GM10248 (cell line): ENCODE measurements at regions of chr5 and their contacts with region 1.

Region 1: DNA sequence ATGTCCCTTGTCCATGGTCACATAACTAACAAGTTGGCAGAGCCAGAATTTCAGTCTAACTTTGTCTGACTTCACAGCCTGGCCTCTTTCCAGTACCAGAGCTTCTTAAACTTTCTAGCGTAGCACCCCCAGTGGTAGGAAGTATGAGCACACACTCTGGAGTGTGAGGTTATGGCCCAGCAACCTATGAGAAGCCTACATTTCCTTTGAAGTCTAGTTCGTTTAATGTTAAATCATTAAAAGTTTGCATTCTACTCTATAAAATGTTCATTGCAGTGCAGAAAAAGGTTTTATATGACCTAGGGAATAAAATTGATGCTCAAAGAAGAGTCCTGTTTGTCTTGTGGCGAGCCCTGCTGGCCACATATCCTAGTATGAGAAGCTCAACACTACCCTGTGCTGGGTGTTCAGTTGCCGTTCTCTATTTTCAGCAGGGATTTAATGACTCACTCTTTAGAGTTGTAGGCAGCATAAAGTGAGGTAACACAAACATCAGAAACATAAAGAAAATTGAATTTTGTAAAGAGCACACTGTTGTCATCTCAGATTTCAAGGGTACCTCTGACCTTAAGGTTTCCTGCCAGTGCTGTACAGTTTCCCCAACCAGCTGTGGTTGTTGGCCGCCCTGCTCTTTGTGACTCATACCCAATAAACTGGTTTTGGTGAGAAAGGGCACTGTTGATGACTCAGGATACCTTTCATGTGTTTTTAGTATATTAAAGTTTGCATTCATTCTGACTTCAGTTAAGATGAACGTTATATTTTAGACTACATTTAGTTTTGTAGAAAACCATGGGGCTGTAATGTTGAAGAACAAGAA is 14.3 kb downstream of the MCCC2 start:
- DNase-seq: peak; percentile 59
- CTCF ChIP-seq: peak; percentile 58

Region 2: GRCh38 chr5:71586941-71587765 is 14.3 kb before region 1 on chr5 and contains the start of gene MCCC2:
- CTCF ChIA-PET with region 1: interaction called, 72 read pairs
- POLR2A ChIA-PET with region 1: interaction called, 6 read pairs
- DNase-seq: peak; percentile 96
- CTCF ChIP-seq: no peak